AG04450 (cell line): ENCODE measurements at regions of chr15 and their contacts with region 1.

Region 1: DNA sequence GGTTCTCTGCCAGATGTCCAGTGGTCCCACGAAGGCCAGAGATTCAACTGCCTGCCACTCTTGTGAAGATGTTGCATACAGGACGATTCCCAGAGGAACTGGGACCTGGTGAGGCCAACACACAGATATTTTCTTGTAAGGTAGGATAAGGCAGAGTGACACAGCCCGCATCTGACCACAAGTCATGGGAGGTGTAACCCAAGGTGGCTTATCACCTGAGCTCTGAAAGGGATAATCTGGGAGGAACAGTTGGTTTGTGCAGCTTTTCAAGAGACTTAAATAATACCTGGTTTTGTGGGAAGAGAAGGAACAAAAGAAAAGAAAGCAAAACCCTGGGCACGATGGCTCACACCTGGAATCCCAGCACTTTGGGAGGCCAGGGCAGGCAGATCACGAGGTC is 39.8 kb upstream of the NR2F2 start:
- DNase-seq: no peak
- H3K4me3 ChIP-seq: no peak overlapping the region
- H3K27ac ChIP-seq: no peak overlapping the region
- H3K27me3 ChIP-seq: no peaks in the 10 kb centered on the region
- CTCF ChIP-seq: no peak

Region 2: GRCh38 chr15:95994418-95994817 is 296.3 kb before region 1 on chr15:
- CTCF ChIA-PET with region 1: no interaction called
- POLR2A ChIA-PET with region 1: no interaction called
- DNase-seq: peak; percentile 37
- H3K4me3 ChIP-seq: no peak overlapping the region
- H3K27ac ChIP-seq: no peak overlapping the region
- H3K27me3 ChIP-seq: no peaks in the 10 kb centered on the region
- CTCF ChIP-seq: no peak

Region 3: GRCh38 chr15:96247621-96248305 is 42.9 kb before region 1 on chr15:
- CTCF ChIA-PET with region 1: no interaction called
- POLR2A ChIA-PET with region 1: no interaction called
- DNase-seq: no peak
- H3K4me3 ChIP-seq: no peak overlapping the region
- H3K27ac ChIP-seq: no peak overlapping the region
- H3K27me3 ChIP-seq: no peaks in the 10 kb centered on the region
- CTCF ChIP-seq: no peak

Region 4: DNA sequence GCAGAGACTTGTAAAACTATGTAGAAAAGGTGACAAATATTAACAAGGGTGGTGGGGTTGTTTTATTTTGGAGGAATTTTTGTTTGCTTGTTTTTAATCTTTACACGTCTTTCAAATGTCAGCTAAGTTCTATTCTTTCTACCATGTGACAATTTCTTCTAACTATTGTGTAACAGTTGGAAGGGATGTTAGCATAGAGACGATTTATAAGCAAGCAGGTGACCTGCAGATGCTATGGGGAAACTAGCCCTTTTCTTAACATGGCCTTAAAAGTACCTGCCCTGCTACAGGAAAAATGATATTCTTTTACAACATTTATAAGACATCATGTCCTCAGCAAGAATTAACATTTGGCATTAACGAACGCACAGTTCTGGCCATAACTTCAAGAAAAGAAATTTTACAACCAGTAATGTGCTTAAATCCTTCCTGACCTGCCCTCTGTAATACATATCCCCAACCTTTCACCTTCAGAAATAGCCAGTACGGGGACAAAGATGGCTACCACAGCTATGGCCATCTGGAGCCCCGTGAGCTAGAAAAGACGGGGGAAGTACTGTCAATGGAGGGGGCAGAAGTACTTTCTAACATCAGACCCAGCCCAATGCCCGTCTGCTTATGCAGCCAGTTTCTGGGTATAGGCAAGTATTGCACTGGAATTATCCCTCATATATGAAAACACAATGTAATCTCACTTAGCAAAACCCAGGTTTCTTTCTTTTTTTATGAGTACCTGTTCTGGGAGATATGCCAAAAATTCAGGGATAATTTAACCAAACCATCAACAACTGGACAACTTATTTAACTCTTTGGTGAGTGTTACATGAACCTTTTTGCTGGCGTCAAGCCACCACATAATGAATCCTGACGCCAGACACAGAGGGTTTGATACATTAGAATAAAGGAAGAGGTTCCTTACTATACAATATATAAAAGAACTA is 27.9 kb before region 1 on chr15:
- CTCF ChIA-PET with region 1: no interaction called
- POLR2A ChIA-PET with region 1: interaction called, 15 read pairs
- DNase-seq: no peak
- H3K4me3 ChIP-seq: no peak overlapping the region
- H3K27ac ChIP-seq: no peak overlapping the region
- H3K27me3 ChIP-seq: no peaks in the 10 kb centered on the region
- CTCF ChIP-seq: no peak

Region 5: DNA sequence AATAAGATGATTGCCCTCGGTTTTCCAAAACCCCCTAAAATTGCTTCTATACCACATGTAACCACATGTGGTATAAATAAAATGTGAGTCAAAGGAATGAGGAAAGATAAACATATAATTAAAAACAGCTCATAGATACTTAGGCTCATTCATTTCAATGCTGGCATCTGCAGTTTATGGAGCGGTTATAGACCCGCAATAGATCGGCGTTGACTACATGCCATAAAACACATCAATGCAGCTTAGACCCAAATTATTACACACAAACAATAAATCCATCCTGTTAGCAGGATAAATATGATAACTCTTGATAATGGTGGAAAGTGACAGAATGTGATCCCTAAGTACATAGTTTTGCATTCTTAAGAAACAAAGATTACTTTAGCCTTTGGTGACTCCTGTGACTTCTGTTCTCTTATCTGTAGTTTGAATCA is 183.6 kb after region 1 on chr15:
- CTCF ChIA-PET with region 1: no interaction called
- POLR2A ChIA-PET with region 1: no interaction called
- DNase-seq: no peak
- H3K4me3 ChIP-seq: no peak overlapping the region
- H3K27ac ChIP-seq: no peak overlapping the region
- H3K27me3 ChIP-seq: peaks cover 9% of the 10 kb centered on the region
- CTCF ChIP-seq: no peak